Activated CD4-positive, alpha-beta memory T cell treated with anti-CD3 and anti-CD28 coated beads for 36 hours (primary cell): ENCODE measurements at regions of chr3 and their contacts with region 1.

Region 1: DNA sequence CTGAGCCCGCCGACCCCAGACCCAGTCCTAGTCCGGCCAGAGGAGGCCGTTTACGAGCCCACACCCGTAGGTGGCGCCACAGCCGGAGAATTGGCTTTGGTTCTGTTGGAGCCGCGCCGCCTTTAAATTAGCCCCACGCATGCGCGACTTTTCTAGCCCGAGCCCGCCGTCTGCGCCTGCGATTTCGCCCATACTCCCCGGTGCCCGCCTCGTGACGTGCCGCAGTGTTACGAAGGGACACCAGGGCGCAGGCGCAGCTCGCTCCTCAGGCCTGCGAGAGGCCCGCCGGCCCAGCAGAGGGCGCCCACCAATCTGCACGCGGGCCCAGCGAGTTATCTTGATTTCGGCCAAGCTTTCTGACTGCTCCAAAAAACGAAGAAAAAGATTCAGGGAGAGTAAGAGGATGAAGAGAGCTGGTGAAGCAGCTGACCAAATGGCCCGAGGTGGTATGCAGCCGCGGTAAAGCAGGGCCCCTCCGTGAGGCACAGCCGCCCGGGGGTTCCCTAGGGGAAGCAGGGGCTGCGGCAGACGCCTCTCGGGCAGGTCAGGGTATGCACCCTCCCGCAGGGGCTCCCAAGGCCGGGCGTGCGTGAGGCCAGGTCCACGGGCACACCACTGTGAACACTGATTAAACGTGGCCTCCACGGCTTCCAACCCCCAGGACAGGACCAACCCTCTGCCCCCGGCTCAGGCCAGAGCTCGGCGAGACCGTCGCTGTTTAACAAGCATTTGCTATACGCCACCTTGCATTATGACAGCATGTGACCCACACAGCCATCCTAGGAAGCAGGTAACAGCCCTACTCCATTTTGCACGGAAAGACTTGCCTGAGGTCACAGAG is 32.8 kb downstream of the RPN1 start:
- DNase-seq: peak; percentile 99
- H3K4me3 Mint-ChIP-seq: peak overlapping the region; percentile 88
- H3K27ac Mint-ChIP-seq: peak overlapping the region; percentile 92
- H3K4me1 Mint-ChIP-seq: peaks cover 36% of the 10 kb centered on the region
- H3K27me3 Mint-ChIP-seq: no peaks in the 10 kb centered on the region

Region 2: GRCh38 chr3:128075516-128076482 is 542.0 kb before region 1 on chr3:
- CTCF ChIA-PET with region 1: no interaction called
- POLR2A ChIA-PET with region 1: no interaction called
- intact Hi-C with region 1: loop called (anchors 10 kb)
- DNase-seq: peak; percentile 87
- H3K4me3 Mint-ChIP-seq: peak overlapping the region; percentile 53
- H3K27ac Mint-ChIP-seq: peak overlapping the region; percentile 42
- H3K4me1 Mint-ChIP-seq: peaks cover 21% of the 10 kb centered on the region
- H3K27me3 Mint-ChIP-seq: no peaks in the 10 kb centered on the region

Region 3: DNA sequence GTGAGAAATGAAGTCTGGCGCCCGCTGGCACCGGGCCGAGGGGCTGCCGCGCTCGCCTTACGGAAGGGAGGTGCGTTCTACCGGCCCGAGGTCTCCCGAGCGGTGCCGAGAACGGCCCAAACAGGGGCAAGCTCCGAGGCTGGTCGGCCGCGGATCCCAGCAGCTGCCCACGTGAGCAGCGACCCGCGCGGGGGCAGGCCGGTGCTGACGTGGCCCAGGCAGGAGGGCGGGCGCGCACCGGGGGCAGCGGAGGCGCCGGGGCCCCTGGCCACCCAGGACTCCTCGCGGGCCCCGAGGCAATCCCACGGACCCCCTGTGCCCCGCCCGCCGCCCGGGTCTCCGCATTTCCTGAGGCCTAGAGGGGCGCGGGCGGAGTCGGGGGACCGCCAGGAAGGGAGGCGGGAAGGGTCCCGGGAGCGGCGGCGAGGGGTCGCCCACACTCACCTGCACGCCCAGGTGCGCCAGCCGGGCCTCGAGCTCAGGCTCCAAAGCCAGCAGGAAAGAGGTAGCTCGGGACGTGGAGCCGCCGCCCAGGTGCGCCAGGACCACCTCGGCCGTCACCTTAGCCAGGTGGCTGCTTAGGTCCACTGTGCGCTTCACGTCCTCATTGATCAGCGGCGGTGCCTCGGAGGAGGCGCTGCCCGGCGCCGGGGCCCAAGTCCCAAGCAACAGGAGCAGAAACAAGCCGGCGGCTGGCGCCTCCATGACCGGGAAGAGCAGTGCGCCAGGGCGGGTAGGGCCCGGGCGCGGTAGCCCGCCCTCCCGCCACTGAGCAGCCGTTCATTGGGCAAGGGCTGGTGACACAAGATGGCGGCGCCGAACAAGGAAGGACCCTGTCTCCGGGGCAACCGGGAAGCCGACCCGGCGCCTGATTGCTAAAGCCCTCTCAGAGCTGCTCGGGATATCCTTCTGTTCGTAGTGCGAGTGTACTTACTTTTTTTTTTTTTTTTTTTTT is 32.6 kb after region 1 on chr3 and contains the start of gene RPN1:
- CTCF ChIA-PET with region 1: interaction called, 16 read pairs
- POLR2A ChIA-PET with region 1: interaction called, 9 read pairs
- intact Hi-C with region 1: loop called (anchors 1 kb)
- DNase-seq: peak; percentile 97
- H3K4me3 Mint-ChIP-seq: peak within 1 kb of the TSS; percentile 87
- H3K27ac Mint-ChIP-seq: peak within 1 kb of the TSS; percentile 89
- H3K4me1 Mint-ChIP-seq: peaks cover 37% of the 10 kb centered on the region
- H3K27me3 Mint-ChIP-seq: no peaks in the 10 kb centered on the region
- total RNA-seq, gene RPN1: 166 to 168 TPM

Region 4: GRCh38 chr3:128794770-128795649 is 177.2 kb after region 1 on chr3:
- CTCF ChIA-PET with region 1: interaction called, 12 read pairs
- POLR2A ChIA-PET with region 1: interaction called, 3 read pairs
- intact Hi-C with region 1: loop called (anchors 2 kb)
- DNase-seq: peak; percentile 72
- H3K4me3 Mint-ChIP-seq: peak overlapping the region; percentile 36
- H3K27ac Mint-ChIP-seq: peak overlapping the region; percentile 93
- H3K4me1 Mint-ChIP-seq: peaks cover 86% of the 10 kb centered on the region
- H3K27me3 Mint-ChIP-seq: no peaks in the 10 kb centered on the region

Region 5: DNA sequence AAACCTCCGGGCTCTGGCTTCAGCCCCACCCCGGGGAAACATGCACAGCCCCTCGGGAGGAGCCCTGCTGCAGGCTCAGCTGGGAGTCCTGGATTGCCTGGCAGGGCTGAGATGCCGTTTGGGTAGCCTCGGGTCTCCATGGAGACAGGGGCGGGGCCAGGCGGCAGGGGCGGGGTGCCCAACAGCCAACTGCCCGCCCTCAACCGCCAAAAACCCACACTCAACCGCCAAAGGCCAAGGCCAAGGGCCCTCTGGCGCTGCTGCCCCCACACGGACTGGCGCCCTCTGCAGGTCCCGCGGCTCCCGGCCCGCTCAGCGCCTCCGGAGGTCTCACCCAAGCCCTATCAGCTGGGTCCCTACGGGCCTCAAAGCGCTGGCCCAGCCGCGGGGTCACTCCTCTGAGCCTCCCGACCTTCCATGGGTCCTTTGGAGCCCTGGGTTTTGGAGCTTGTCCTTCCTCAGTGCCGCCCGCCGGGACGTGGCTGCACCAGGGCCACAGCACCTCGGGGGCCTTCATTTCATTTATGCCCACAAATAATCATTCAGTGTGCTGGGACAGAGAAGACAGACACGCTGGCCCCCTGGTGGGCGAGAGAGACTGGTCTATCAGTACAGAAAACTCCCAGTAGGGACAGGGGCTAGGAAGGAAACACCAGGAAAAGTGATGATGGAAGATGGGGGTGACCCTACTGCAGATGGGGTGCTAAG is 228.2 kb after region 1 on chr3:
- CTCF ChIA-PET with region 1: interaction called, 27 read pairs
- POLR2A ChIA-PET with region 1: no interaction called
- intact Hi-C with region 1: loop called (anchors 2 kb)
- DNase-seq: peak; percentile 92
- H3K4me3 Mint-ChIP-seq: peak overlapping the region; percentile 45
- H3K27ac Mint-ChIP-seq: peak overlapping the region; percentile 84
- H3K4me1 Mint-ChIP-seq: peaks cover 18% of the 10 kb centered on the region
- H3K27me3 Mint-ChIP-seq: no peaks in the 10 kb centered on the region

Region 6: DNA sequence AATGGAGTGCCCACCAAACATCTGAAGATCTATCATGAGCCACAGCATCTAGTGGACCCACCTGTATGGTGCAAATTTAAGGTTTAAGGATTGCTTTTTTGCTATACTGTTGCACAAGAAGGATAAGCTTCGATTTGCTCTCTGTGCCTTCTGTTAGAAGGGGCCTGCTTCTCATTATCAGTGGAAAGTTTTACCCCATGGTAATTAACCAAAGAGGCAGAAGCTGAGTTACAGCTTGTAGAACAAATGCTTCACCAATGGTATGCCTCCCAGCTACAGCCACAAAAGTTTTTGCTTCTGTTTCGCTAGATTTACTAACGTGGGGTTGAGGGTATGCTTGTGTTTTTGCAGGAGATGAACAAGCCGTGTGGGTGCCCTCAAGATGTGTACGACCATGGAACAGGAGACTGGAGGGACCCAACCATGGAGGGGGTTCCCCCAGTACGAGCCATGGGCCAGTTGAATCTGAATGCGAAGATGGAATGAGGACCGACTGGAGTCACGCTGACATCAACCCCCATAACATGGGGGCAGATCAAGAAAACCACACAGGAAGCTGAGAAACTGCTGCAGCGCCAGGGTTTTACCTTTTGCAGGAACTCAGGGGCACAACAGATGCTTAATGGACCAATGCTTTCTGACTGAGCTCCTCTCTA is 305.2 kb after region 1 on chr3:
- CTCF ChIA-PET with region 1: interaction called, 6 read pairs
- POLR2A ChIA-PET with region 1: no interaction called
- intact Hi-C with region 1: loop called (anchors 5 kb)
- DNase-seq: peak; percentile 77
- H3K4me3 Mint-ChIP-seq: peak overlapping the region; percentile 55
- H3K27ac Mint-ChIP-seq: peak overlapping the region; percentile 40
- H3K4me1 Mint-ChIP-seq: peaks cover 29% of the 10 kb centered on the region
- H3K27me3 Mint-ChIP-seq: no peaks in the 10 kb centered on the region